A549 (cell line): ENCODE measurements at regions of chr17 and their contacts with region 1.

Region 1: DNA sequence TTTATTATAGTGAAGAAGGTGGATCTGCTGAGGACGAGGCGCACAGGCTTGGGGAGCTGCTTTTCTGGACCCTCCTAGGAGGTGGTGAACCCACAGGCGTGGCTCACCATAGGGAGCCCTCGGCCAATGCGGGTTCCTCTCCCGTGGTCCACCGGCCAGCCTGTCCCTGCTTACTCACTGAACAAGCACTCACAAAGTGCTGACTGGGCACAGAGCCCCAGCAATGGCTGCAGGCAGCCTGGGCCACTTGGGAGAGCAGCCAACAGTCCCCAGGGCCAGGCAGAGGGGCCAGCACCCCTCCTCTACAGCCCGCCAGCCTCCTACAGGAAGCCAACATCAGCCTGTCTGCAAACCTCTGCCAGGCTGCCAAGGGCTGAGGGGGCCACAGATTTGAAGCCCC is 19.1 kb upstream of the NCBP3 start:
- DNase-seq: no peak
- ATAC-seq: peak; percentile 42 to 57
- H3K4me3 ChIP-seq: no peak overlapping the region
- H3K27ac ChIP-seq: peak overlapping the region in 1 of 2 experiments; percentile 36; a peak in 3 of 6 replicates
- H3K4me1 ChIP-seq: peaks cover 9% of the 10 kb centered on the region; the same call in 2 of the 3 replicates
- CTCF ChIP-seq: no peak
- EP300 ChIP-seq: no peak
- POLR2A ChIP-seq: no peak
- RAD21 ChIP-seq: no peak

Region 2: DNA sequence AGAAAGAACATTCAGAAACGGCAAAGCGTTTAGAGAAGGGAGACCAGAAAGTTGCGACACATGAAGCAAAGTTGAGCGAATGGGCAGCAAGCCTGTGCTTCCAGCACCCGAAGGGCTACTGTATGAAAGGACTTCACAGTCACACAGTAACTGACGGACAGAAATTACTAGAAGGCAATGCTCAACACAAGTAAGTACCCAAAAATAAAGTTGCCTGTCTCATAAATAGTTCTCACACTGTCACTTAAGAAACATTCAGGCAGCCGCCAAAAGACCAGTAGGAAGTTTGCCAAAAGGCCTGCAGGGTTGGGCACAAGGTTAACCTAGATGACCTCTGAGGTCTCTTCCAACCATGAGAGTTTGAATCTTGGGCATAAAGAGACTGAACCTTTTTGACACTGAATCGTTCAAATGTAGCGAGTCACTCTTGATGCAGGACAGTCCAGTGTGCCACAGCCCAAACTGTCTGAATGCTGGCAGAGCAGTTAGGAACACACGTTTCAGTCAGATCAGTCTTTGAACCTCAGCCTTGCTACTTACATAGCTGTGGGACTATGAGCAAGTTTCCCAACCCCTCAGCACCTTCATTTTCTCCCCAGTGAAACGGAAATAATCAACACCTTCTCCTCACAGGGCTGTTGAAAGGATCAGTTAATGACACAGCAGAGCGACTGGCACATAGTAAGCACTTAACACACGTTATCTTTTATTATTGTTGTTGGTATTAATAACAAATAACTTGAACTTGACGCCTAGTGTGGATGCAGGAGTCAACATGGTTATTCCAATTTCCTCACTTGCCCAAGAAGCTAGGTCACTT is 29.6 kb before region 1 on chr17:
- CTCF ChIA-PET with region 1: interaction called, 22 read pairs
- POLR2A ChIA-PET with region 1: no interaction called
- DNase-seq: no peak
- ATAC-seq: peak in 1 of 2 experiments; percentile 13; a peak in 2 of 6 replicates
- H3K4me3 ChIP-seq: no peak overlapping the region
- H3K27ac ChIP-seq: no peak overlapping the region
- H3K4me1 ChIP-seq: no peaks in the 10 kb centered on the region
- CTCF ChIP-seq: no peak
- EP300 ChIP-seq: no peak
- POLR2A ChIP-seq: no peak
- RAD21 ChIP-seq: no peak

Region 3: GRCh38 chr17:3879186-3879585 is 14.0 kb after region 1 on chr17:
- CTCF ChIA-PET with region 1: interaction called, 101 read pairs
- POLR2A ChIA-PET with region 1: no interaction called
- DNase-seq: no peak
- ATAC-seq: peak in 1 of 2 experiments; percentile 12; a peak in 1 of 6 replicates
- H3K4me3 ChIP-seq: no peak overlapping the region
- H3K27ac ChIP-seq: no peak overlapping the region
- H3K4me1 ChIP-seq: no peaks in the 10 kb centered on the region
- CTCF ChIP-seq: no peak
- EP300 ChIP-seq: no peak
- POLR2A ChIP-seq: no peak
- RAD21 ChIP-seq: no peak

Region 4: DNA sequence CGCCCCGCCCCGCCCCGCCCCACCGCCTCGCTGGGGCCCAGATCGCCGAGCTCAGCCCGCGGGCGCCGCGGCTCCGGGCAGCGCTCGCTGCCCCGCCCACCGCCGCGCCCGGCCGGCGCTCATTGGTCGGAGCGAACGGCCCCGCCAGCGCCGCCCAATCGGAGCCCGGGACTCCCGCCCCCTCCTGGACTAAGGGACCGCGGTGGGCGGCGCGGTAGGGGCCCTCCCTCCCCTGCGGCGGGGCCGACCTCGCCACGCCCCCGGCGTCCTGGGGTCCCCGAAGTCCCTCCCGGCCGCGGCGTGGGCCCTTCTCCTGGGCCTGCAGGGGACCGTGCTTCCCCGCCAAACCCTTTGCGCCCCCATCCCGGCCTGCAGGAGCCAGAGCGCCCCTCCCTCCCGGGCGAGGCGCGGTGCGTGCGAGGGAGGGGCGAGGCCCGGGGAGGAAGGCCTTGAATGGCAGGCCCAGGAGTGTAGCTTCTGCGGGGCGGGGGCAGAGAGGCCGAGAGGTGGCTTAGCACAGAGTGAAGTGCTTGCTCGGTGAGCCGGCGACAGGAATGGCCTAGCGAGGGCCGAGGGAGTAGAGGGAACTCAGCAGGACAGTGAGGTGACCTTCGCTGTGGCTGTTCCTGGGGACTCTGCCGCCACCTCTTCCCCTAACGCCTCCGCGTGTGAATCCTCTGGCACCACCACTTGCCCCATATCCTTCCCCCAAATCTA is 28.0 kb after region 1 on chr17 and contains the start of gene CAMKK1:
- CTCF ChIA-PET with region 1: interaction called, 29 read pairs
- POLR2A ChIA-PET with region 1: no interaction called
- DNase-seq: peak; percentile 86 to 98
- ATAC-seq: peak; percentile 57 to 78
- H3K4me3 ChIP-seq: peak within 1 kb of the TSS; percentile 79
- H3K27ac ChIP-seq: peak within 1 kb of the TSS; percentile 87 to 89
- H3K4me1 ChIP-seq: peaks cover 54% of the 10 kb centered on the region
- CTCF ChIP-seq: no peak
- EP300 ChIP-seq: no peak
- POLR2A ChIP-seq: peak; percentile 15; the same call in 1 of the 2 replicates
- RAD21 ChIP-seq: no peak
- polyA plus RNA-seq, gene CAMKK1: 6.9 and 7.7 TPM in 2 replicates

Region 5: DNA sequence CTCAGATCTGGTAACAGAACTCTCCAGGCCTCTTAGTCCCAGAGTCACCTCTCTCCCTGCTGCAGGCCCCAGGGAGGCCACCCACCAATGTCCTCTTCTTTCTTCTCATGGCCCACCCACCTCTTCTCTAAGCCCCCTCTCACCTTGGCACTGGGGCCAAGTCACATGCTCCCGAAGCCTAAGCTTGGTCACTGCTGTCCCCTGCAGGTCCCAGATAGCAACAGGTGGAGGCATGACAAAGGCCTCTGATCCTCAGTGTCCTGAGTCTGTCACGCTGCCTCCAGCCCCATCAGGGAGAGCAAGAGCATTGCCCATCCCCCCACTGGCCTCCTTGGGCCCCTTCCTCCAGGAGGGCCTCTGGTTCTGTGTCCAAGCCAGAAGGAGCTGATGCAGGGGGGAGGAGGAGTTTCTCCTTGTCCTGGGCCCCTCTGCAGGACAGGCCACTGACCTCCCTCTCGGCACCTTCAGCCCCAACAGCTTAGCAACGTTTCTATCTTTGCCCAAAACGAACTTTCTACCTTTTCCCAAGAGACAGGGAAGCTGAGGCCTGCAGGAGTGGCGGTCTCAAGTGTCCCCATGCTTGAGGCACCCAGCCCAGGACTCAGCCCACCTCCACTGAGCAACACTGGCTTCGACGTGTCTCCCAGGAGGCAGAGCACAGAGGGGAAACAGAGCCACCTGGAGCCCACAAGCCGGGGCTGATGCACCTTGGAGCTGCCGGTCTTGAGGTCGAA is 42.5 kb after region 1 on chr17:
- CTCF ChIA-PET with region 1: interaction called, 81 read pairs
- POLR2A ChIA-PET with region 1: no interaction called
- DNase-seq: peak in 1 of 2 experiments; percentile 40
- ATAC-seq: peak; percentile 37 to 48; a peak in 4 of 6 replicates
- H3K4me3 ChIP-seq: no peak overlapping the region
- H3K27ac ChIP-seq: no peak overlapping the region
- H3K4me1 ChIP-seq: no peaks in the 10 kb centered on the region
- CTCF ChIP-seq: peak; percentile 52
- EP300 ChIP-seq: no peak
- POLR2A ChIP-seq: no peak
- RAD21 ChIP-seq: peak; percentile 72 to 83